ENCODE measurements at regions of chr1 and their contacts with region 1.

Region 1: GRCh38 chr1:37931361-37932158 is 15.3 kb downstream of the INPP5B start:
- DNase-seq: peak; percentile 96 to 99
- H3K4me3 ChIP-seq: peak overlapping the region; percentile 74 to 89 (median 86)
- H3K27ac ChIP-seq: peak overlapping the region; percentile 63; the same call in 1 of the 2 replicates
- H3K4me1 ChIP-seq: peaks cover 0 to 3% (median 1%) of the 10 kb centered on the region in 4 experiments; a peak in 4 of 7 replicates
- H3K27me3 ChIP-seq: no peaks in the 10 kb centered on the region
- CTCF ChIP-seq: peak in 1 of 3 experiments; percentile 8; a peak in 1 of 4 replicates
- EP300 ChIP-seq: no peak
- POLR2A ChIP-seq: peak in 1 of 2 experiments; percentile 58; a peak in 2 of 3 replicates
- RAD21 ChIP-seq: no peak

Region 2: DNA sequence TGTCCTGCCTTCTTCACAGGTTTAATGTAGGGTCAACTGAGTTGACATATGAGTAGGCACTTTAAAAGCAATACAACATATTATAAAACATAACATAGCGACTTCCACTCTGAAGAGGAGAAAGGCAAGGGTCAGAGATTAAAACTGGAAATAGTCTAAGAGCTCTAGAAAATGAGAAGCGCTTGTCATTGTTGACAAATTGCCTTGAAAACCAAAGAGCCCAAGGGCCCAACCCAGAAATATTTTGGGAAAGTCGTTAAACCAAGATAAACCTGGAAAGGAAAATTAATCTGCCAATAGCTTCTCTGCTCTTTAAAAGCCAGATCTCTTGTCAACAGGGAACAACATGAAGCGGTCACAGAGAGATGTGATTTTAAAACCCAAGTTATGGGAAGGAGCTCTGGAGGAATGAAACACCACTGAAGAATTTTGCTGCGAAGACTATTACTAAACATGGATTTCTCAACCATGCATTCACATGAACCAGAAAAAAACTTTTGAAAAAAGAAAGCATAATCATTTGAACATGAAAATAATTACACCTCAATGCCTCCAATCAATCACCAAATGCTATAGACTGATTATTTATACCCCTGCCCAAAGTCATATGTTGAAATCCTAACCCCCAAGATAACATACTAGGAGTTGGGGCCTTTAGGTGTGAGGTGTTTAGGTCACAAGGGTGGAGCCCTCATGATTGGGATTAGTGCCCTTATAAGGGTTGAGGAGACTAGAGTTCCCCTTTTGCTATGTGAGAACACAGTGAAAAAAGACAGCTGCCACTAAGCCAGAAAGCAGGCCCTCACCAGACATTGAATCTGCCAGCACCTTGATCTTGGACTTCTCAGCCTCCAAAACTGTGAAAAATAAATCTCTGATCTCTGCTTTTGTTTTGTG is 39.2 kb before region 1 on chr1:
- CTCF ChIA-PET with region 1: interaction called, 18 read pairs
- POLR2A ChIA-PET with region 1: no interaction called
- DNase-seq: no peak
- H3K4me3 ChIP-seq: no peak overlapping the region
- H3K27ac ChIP-seq: no peak overlapping the region
- H3K4me1 ChIP-seq: no peaks in the 10 kb centered on the region
- H3K27me3 ChIP-seq: no peaks in the 10 kb centered on the region
- CTCF ChIP-seq: no peak
- EP300 ChIP-seq: no peak
- POLR2A ChIP-seq: no peak
- RAD21 ChIP-seq: no peak

Region 3: DNA sequence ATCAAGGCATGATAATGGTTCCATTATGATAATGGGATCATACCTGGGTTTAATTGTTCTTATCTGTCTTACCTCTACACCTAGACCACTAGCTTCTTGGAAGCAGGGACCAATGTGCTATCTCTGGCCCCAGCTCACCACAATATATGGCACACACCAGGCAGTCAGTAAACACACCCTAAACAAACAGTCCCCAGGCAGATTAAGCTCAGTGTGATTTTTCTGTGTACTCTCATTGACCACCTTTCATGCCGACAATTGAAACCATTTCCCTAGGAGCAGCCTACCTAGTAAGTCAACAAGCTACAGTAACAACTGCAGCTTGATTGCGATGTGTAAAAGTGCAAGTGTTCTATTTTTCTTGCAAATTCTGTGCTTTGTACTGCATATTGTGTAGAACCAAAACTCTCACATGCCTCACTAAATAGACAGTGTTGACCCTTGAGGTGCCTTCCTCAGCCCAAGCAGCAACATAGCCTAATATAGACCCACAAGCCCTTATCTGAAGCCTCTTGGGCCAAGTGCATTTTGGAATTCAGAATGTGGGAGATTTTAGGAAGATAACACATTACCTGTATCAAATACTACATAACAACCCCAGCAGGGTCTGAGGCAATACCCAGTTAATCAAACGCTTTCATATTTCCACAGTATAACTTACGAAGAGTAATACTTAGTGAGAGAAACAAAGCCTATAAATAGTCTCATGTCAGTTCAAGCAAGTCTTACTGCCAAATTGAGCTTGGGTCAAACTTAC is 16.7 kb before region 1 on chr1:
- CTCF ChIA-PET with region 1: interaction called, 19 read pairs
- POLR2A ChIA-PET with region 1: interaction called, 5 read pairs
- DNase-seq: no peak
- H3K4me3 ChIP-seq: no peak overlapping the region
- H3K27ac ChIP-seq: no peak overlapping the region
- H3K4me1 ChIP-seq: no peaks in the 10 kb centered on the region
- H3K27me3 ChIP-seq: no peaks in the 10 kb centered on the region
- CTCF ChIP-seq: no peak
- EP300 ChIP-seq: no peak
- POLR2A ChIP-seq: no peak
- RAD21 ChIP-seq: no peak

Region 4: GRCh38 chr1:37946703-37947360 is 15.3 kb after region 1 on chr1 and contains the start of gene INPP5B:
- CTCF ChIA-PET with region 1: interaction called, 47 read pairs
- POLR2A ChIA-PET with region 1: interaction called, 19 read pairs
- DNase-seq: peak; percentile 67 to 90
- H3K4me3 ChIP-seq: peak within 1 kb of the TSS; percentile 51 to 89 (median 72)
- H3K27ac ChIP-seq: peak within 1 kb of the TSS; percentile 74; the same call in 1 of the 2 replicates
- H3K4me1 ChIP-seq: peaks cover 0 to 4% (median 1%) of the 10 kb centered on the region in 4 experiments; a peak in 5 of 7 replicates
- H3K27me3 ChIP-seq: no peaks in the 10 kb centered on the region
- CTCF ChIP-seq: no peak
- EP300 ChIP-seq: no peak
- POLR2A ChIP-seq: no peak
- RAD21 ChIP-seq: no peak
- total RNA-seq, gene INPP5B: 23.7 and 25.1 TPM in 2 replicates